ENCODE measurements at regions of chr7 and their contacts with region 1.

Region 1: DNA sequence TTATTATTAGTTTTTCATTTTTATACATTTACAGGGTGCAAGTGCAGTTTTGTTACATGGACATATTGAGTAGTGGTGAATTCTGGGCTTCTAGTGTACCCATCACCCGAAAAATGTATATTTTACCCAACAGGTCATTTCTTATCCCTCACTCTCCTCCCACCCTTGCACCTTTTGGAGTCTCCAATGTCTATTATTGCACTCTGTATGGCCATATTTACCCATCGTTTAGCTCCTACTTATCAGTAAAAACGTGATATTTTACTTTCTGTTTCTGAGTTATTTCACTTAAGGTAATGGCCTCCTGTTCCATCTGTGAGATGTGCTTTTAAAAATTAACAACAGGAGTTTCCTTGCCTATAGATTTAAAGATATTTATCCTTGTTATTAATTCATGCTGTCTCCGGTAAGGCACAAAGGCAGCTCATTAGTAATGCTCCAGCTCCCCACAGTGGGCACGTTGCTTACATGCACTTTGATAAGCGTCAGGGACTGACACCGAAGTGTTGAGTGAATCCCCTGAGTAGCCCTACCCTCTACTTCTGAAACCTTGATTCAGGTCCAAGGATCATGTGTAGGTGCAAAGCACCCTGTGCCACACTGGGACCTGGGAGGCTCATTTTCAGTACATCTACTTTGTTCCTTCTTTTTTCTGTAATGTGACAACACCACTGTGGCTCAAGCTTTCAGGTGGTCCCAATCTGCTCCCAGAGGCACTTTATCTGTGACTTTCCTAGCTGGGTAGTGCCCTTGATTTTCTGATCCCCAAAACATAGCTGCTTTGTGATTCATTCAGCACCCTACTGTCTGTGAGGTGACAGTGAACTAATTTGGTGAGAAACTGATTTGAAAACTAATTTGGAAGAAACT is 27.3 kb downstream of the HYAL4 start:
- DNase-seq: peak in 5 of 9 donors; percentile 3 to 26 (median 16)
- ATAC-seq: peak; percentile 63
- H3K4me3 ChIP-seq: no peak overlapping the region
- H3K4me3 Mint-ChIP-seq: no peak overlapping the region
- H3K27ac ChIP-seq: no peak overlapping the region
- H3K27ac Mint-ChIP-seq: no peak overlapping the region
- H3K4me1 ChIP-seq: no peaks in the 10 kb centered on the region
- H3K4me1 Mint-ChIP-seq: peaks cover 0 to 6% (median 0%) of the 10 kb centered on the region in 7 donors
- H3K27me3 ChIP-seq: no peaks in the 10 kb centered on the region
- H3K27me3 Mint-ChIP-seq: peaks cover 5 to 28% (median 10%) of the 10 kb centered on the region in 5 donors

Region 2: DNA sequence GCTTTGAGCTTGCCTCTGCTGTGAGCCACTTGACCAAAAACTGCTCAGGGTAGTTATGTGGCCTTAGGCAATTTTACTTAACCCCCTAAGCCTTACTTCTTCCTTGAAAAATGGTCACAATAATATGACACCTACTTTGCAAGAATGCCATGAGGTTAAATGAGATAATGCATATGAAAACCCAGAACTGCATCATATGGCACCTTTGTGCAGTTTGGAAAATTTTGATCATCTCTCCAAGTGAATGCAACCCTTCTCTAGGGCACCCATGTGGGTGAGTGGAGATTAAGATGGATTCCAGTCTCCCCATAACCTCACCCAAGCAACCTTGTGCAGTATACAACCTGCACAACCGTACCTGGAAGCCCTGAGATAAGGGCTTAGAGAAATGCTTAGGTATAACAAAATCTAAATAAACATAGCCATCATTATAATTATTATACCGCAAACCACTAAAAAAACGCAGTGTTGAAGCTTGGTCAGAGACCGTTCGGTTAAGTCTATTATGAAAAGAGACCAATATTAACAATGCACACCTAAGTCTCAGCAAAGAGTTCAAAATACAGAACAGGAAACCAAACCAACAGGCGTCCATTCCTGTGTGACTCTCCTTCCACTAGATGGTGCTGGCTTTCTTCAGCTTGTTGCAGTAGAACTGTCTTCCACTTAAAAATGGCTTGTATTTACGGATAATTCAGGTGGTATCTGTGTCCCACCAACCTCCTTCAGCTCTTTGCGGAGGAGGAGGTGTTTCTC is 291.6 kb before region 1 on chr7:
- CTCF ChIA-PET with region 1: no interaction called
- POLR2A ChIA-PET with region 1: no interaction called
- intact Hi-C with region 1: loop called (anchors 2 to 5 kb)
- DNase-seq: peak in 2 of 9 donors; percentile 9 to 10
- ATAC-seq: peak; percentile 53
- H3K4me3 ChIP-seq: no peak overlapping the region
- H3K4me3 Mint-ChIP-seq: no peak overlapping the region
- H3K27ac ChIP-seq: no peak overlapping the region
- H3K27ac Mint-ChIP-seq: no peak overlapping the region
- H3K4me1 ChIP-seq: no peaks in the 10 kb centered on the region
- H3K4me1 Mint-ChIP-seq: peaks cover 0 to 2% (median 0%) of the 10 kb centered on the region in 7 donors
- H3K27me3 ChIP-seq: no peaks in the 10 kb centered on the region
- H3K27me3 Mint-ChIP-seq: peaks cover 13 to 37% (median 29%) of the 10 kb centered on the region in 5 donors

Region 3: GRCh38 chr7:123624527-123625183 is 247.6 kb before region 1 on chr7:
- CTCF ChIA-PET with region 1: interaction called, 5 read pairs
- POLR2A ChIA-PET with region 1: no interaction called
- intact Hi-C with region 1: loop called in 1 of 2 experiments (anchors 2 kb)
- DNase-seq: peak in 8 of 9 donors; percentile 19 to 54 (median 30)
- ATAC-seq: peak; percentile 57
- H3K4me3 ChIP-seq: no peak overlapping the region
- H3K4me3 Mint-ChIP-seq: no peak overlapping the region
- H3K27ac ChIP-seq: no peak overlapping the region
- H3K27ac Mint-ChIP-seq: no peak overlapping the region
- H3K4me1 ChIP-seq: no peaks in the 10 kb centered on the region
- H3K4me1 Mint-ChIP-seq: peaks cover 0 to 5% (median 0%) of the 10 kb centered on the region in 7 donors
- H3K27me3 ChIP-seq: no peaks in the 10 kb centered on the region
- H3K27me3 Mint-ChIP-seq: peaks cover 0 to 11% (median 8%) of the 10 kb centered on the region in 5 donors